ENCODE measurements at regions of chr13 and their contacts with region 1.

Region 1: DNA sequence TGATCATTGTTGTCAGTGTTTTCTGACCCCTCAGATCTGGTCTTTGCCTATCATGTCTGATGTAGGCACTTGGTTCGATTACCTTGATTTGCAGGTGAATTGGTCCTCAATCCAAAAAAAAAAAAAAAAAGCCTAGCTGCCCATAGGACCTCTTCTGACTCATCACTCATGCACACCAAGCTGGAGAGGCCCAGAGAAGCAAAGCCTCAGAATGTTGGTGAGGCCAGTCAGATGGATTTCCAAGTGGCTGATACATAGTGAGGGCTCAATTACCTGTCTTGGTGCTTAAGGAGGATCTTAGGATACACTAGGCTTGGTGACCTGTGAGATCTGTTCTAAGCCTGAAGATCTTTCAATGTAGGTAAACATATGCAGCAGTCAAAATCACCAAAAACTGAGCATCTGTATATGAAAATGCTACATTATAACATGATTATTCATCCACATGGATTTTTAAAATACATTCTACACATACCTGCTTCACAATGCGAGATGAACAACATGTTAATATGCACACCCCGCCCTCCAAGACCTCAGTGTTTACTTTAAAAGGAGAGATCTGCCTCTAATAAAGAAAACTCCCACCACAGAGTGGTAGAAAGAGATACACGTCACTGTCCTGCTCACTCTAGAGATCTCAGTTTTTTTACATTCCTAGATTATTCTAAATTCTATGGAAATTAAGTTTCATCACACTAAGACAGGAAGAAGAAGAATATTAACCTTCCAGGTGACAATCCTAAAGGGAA is 79.9 kb upstream of the RAP2A start:
- DNase-seq: peak; percentile 10 to 57
- H3K4me3 ChIP-seq: no peak overlapping the region
- H3K27ac ChIP-seq: no peak overlapping the region
- H3K4me1 ChIP-seq: no peaks in the 10 kb centered on the region
- H3K27me3 ChIP-seq: no peaks in the 10 kb centered on the region
- CTCF ChIP-seq: no peak

Region 2: DNA sequence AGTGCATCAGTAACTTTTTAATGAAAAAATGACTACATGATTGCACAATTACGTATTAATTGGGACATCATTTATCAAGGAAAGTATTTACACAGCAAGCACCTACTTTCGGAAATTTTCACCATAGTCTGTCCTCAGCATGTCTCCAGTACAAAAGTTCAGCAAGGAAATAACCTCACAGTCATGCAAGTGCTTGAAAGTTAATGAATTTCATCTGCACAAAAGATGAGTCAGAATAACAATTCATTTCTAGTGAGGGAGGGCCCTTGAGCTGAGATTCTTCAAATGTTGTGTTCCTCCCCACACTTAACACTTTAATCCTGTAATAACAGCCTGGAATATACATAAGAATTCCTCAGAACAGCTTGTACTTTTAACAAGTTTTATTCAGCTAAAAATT is 310.8 kb before region 1 on chr13:
- CTCF ChIA-PET with region 1: no interaction called
- POLR2A ChIA-PET with region 1: interaction called, 17 read pairs
- intact Hi-C with region 1: no loop called
- DNase-seq: no peak
- H3K4me3 ChIP-seq: no peak overlapping the region
- H3K27ac ChIP-seq: no peak overlapping the region
- H3K4me1 ChIP-seq: no peaks in the 10 kb centered on the region
- H3K27me3 ChIP-seq: no peaks in the 10 kb centered on the region
- CTCF ChIP-seq: no peak

Measured in PC-9 (cell line).